ENCODE measurements at regions of chr10 and their contacts with region 1.

Region 1: GRCh38 chr10:25493122-25494009 is 318.6 kb downstream of the GPR158 start:
- DNase-seq: peak; percentile 80
- H3K4me3 Mint-ChIP-seq: no peak overlapping the region
- H3K27ac Mint-ChIP-seq: peak overlapping the region; percentile 50
- H3K4me1 Mint-ChIP-seq: peaks cover 24% of the 10 kb centered on the region
- H3K27me3 Mint-ChIP-seq: no peaks in the 10 kb centered on the region
- CTCF ChIP-seq: no peak

Region 2: GRCh38 chr10:25436431-25436830 is 56.9 kb before region 1 on chr10:
- CTCF ChIA-PET with region 1: no interaction called
- POLR2A ChIA-PET with region 1: no interaction called
- intact Hi-C with region 1: no loop called
- DNase-seq: no peak
- H3K4me3 Mint-ChIP-seq: no peak overlapping the region
- H3K27ac Mint-ChIP-seq: no peak overlapping the region
- H3K4me1 Mint-ChIP-seq: no peaks in the 10 kb centered on the region
- H3K27me3 Mint-ChIP-seq: peaks cover 50% of the 10 kb centered on the region
- CTCF ChIP-seq: no peak

Region 3: DNA sequence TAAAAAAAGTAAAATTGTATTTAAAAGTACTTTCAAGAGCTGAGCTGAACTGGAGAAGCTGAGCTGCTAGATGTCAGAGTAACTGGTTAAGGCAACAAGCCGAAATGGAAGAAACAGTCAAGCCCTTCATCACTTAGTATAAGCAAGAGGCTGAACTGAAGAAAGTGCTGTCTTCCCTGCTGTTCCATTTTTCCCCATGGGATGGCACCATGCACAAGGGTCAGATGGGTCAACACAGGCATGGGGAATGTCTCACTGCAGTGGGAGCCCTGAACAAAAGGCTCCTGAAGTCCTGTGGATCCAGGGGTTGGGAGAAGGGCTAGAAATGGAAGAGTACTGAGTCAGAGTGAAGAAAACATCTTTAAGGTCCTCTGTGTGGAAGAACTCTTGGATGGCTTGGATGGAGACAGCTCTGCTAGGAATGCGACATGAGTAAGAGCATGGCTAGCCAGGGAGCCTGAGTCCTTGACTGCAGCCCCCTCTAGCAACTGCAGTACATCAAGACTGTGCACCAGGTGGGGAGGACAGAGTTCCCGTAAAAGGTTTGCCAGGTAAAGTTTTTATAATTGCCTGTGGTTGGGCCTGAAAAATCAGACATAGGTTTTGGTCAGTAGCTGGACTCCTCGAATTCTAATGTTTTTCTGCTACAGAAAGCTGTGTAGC is 29.7 kb after region 1 on chr10:
- CTCF ChIA-PET with region 1: no interaction called
- POLR2A ChIA-PET with region 1: no interaction called
- intact Hi-C with region 1: no loop called
- DNase-seq: peak; percentile 53
- H3K4me3 Mint-ChIP-seq: no peak overlapping the region
- H3K27ac Mint-ChIP-seq: no peak overlapping the region
- H3K4me1 Mint-ChIP-seq: no peaks in the 10 kb centered on the region
- H3K27me3 Mint-ChIP-seq: peaks cover 48% of the 10 kb centered on the region
- CTCF ChIP-seq: peak; percentile 19

Region 4: DNA sequence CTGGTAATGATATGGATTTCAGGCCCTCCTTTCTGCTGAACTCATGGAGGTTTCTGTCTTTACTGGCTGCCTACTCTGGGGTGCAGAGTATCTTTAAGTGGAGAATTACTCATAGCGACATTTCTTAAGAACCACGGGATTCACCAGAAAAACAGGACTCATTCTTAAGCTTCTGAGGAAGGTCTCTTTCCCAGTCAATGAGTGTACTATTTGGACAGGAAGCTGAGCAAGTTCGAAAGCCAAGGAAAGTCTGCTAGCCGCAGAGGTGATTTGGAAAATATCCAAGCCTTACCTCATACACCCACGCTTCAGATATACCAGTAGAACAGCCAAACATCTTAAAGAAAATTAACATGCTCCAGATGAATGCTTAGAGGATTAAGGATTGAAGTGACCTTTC is 63.1 kb after region 1 on chr10:
- CTCF ChIA-PET with region 1: no interaction called
- POLR2A ChIA-PET with region 1: no interaction called
- intact Hi-C with region 1: loop called (anchors 5 kb)
- DNase-seq: peak; percentile 63
- H3K4me3 Mint-ChIP-seq: no peak overlapping the region
- H3K27ac Mint-ChIP-seq: no peak overlapping the region
- H3K4me1 Mint-ChIP-seq: no peaks in the 10 kb centered on the region
- H3K27me3 Mint-ChIP-seq: peaks cover 41% of the 10 kb centered on the region
- CTCF ChIP-seq: no peak

Measured in MCF 10A (cell line).